ENCODE measurements at regions of chr4 and their contacts with region 1.

Region 1: GRCh38 chr4:52643785-52644244 is 15.3 kb downstream of the USP46 start:
- DNase-seq: peak; percentile 66 to 81
- ATAC-seq: peak; percentile 70 to 95 (median 87)
- H3K4me3 ChIP-seq: no peak overlapping the region
- H3K27ac ChIP-seq: peak overlapping the region in 9 of 10 donors; percentile 10 to 68 (median 51)
- H3K4me1 ChIP-seq: peaks cover 23 to 94% (median 75%) of the 10 kb centered on the region in 9 donors
- H3K27me3 ChIP-seq: no peaks in the 10 kb centered on the region
- CTCF ChIP-seq: no peak

Region 2: GRCh38 chr4:52595001-52595400 is 48.8 kb before region 1 on chr4:
- intact Hi-C with region 1: loop called in 2 of 10 experiments (anchors 5 to 10 kb)
- DNase-seq: no peak
- ATAC-seq: no peak
- H3K4me3 ChIP-seq: no peak overlapping the region
- H3K27ac ChIP-seq: no peak overlapping the region
- H3K4me1 ChIP-seq: peaks cover 0 to 23% (median 0%) of the 10 kb centered on the region in 9 donors
- H3K27me3 ChIP-seq: no peaks in the 10 kb centered on the region
- CTCF ChIP-seq: no peak

Measured in heart right ventricle (tissue), 16 donors.